ENCODE measurements at regions of chr3 and their contacts with region 1.

Region 1: DNA sequence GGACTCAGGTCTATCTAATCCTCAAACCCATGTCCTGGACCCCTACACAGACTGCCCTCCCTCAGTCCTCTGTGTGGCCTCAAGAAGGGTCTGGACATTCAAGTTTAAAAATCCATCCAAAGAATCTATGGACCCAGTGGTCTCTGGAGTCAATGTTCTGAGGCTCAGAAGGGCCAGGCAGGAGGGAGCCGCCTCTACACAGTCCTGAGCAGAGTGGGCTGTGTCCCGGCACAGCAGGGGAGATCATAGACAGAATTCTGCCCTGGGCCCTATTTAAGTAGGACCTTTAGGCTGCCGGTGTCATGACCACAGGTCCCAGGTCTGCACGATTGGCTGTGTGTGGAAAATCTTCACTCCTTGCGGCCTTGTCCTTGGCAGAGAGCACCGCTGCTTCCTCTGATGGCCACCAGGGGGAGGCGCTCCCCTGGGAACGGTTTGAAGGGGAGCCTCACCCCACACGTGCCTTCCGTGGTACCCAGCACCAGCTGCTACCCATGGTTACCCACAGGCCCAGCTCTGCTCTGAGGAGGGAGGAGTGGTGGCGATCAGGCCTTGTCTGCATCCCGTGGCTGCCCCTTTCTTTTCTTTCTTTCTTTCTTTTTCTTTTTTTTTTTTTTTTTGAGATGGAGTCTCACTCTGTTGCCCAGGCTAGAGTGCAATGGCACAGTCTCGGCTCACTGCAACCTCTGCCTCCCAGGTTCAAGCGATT is 37.9 kb downstream of the CHRD start:
- DNase-seq: peak; percentile 70 to 83 (median 78)
- ATAC-seq: peak; percentile 98
- H3K4me3 ChIP-seq: no peak overlapping the region
- H3K27ac ChIP-seq: no peak overlapping the region
- H3K4me1 ChIP-seq: no peaks in the 10 kb centered on the region
- H3K27me3 ChIP-seq: peaks cover 0 to 34% of the 10 kb centered on the region in 2 experiments; a peak in 3 of 5 replicates
- CTCF ChIP-seq: peak; percentile 88 to 92 (median 89)
- EP300 ChIP-seq: no peak
- POLR2A ChIP-seq: no peak
- RAD21 ChIP-seq: peak; percentile 62 to 89

Region 2: DNA sequence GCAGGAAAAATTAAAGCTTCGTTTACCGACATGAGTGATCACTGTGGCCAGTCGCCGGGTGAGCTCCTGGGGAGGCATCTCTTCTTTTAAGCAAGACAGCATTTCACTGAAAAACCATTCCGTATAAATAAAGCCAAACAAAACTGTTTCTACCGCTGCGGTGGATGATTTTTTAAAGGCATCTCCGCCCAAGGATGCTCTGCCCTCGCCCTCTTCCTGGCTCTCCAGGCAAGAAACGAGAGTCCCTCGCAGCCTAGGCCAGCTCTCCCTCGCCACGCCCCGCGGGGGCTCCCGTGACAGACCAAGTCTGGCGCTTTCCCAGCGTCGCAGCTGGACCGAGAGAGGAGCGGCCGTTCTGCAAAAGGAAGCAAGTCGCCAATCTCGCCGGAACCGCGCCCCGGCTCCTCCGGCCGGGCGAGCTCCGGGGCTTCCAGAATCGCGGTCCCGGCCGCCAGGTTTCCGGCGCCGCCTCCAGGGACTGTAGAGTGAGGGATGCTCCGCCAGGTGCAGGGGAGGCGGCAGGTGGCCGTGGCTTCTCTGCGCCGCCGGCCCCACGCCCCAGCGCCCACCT is 989.8 kb before region 1 on chr3:
- CTCF ChIA-PET with region 1: no interaction called
- POLR2A ChIA-PET with region 1: no interaction called
- in situ Hi-C with region 1: no loop called
- intact Hi-C with region 1: no loop called
- DNase-seq: peak; percentile 56 to 69 (median 58)
- ATAC-seq: peak; percentile 77
- H3K4me3 ChIP-seq: peak overlapping the region; percentile 88
- H3K27ac ChIP-seq: peak overlapping the region; percentile 34; the same call in 1 of the 3 replicates
- H3K4me1 ChIP-seq: peaks cover 8 to 25% of the 10 kb centered on the region in 2 experiments; a peak in 4 of 5 replicates
- H3K27me3 ChIP-seq: no peaks in the 10 kb centered on the region
- CTCF ChIP-seq: no peak
- EP300 ChIP-seq: no peak
- POLR2A ChIP-seq: no peak
- RAD21 ChIP-seq: no peak

Region 3: DNA sequence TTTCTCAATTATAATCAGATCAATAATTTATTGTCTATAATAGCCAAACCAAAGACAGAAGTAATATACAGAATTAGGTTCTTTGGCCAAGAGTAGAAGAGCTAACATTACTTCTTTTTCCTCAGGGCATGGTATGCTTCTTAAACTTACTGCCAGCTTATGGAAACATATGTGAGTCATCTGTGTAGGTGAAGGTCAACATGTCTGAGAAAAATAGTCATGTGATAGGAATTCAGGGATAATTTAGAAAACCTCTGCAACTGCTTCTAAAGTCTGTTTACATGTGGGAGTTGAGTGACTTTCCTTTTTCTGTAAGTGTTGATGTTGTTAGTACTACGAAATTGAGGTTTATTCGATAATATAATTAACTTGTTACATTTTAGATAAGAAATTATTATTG is 573.2 kb before region 1 on chr3:
- CTCF ChIA-PET with region 1: no interaction called
- POLR2A ChIA-PET with region 1: no interaction called
- in situ Hi-C with region 1: no loop called
- intact Hi-C with region 1: no loop called
- DNase-seq: no peak
- ATAC-seq: no peak
- H3K4me3 ChIP-seq: no peak overlapping the region
- H3K27ac ChIP-seq: no peak overlapping the region
- H3K4me1 ChIP-seq: no peaks in the 10 kb centered on the region
- H3K27me3 ChIP-seq: no peaks in the 10 kb centered on the region
- CTCF ChIP-seq: no peak
- EP300 ChIP-seq: no peak
- POLR2A ChIP-seq: no peak
- RAD21 ChIP-seq: no peak

Region 4: GRCh38 chr3:184469423-184469822 is 51.6 kb after region 1 on chr3:
- CTCF ChIA-PET with region 1: interaction called, 3 read pairs
- POLR2A ChIA-PET with region 1: interaction called, 5 read pairs
- in situ Hi-C with region 1: no loop called
- intact Hi-C with region 1: loop called (anchors 1 kb)
- DNase-seq: peak; percentile 48 to 59 (median 52)
- ATAC-seq: peak; percentile 84
- H3K4me3 ChIP-seq: no peak overlapping the region
- H3K27ac ChIP-seq: no peak overlapping the region
- H3K4me1 ChIP-seq: no peaks in the 10 kb centered on the region; a peak in 1 of 5 replicates
- H3K27me3 ChIP-seq: peaks cover 11 to 47% of the 10 kb centered on the region in 2 experiments; a peak in 4 of 5 replicates
- CTCF ChIP-seq: peak; percentile 76 to 80 (median 77)
- EP300 ChIP-seq: no peak
- POLR2A ChIP-seq: no peak
- RAD21 ChIP-seq: peak; percentile 42 to 78

Region 5: GRCh38 chr3:184513276-184514170 is 95.8 kb after region 1 on chr3:
- CTCF ChIA-PET with region 1: no interaction called
- POLR2A ChIA-PET with region 1: no interaction called
- in situ Hi-C with region 1: no loop called
- intact Hi-C with region 1: loop called (anchors 1 kb)
- DNase-seq: peak; percentile 78 to 87 (median 84)
- ATAC-seq: peak; percentile 100
- H3K4me3 ChIP-seq: no peak overlapping the region
- H3K27ac ChIP-seq: no peak overlapping the region
- H3K4me1 ChIP-seq: peaks cover 0 to 10% of the 10 kb centered on the region in 2 experiments; a peak in 2 of 5 replicates
- H3K27me3 ChIP-seq: peaks cover 10 to 35% of the 10 kb centered on the region in 2 experiments; a peak in 3 of 5 replicates
- CTCF ChIP-seq: peak; percentile 79 to 83 (median 82)
- EP300 ChIP-seq: no peak
- POLR2A ChIP-seq: no peak
- RAD21 ChIP-seq: peak; percentile 47 to 76

Region 6: DNA sequence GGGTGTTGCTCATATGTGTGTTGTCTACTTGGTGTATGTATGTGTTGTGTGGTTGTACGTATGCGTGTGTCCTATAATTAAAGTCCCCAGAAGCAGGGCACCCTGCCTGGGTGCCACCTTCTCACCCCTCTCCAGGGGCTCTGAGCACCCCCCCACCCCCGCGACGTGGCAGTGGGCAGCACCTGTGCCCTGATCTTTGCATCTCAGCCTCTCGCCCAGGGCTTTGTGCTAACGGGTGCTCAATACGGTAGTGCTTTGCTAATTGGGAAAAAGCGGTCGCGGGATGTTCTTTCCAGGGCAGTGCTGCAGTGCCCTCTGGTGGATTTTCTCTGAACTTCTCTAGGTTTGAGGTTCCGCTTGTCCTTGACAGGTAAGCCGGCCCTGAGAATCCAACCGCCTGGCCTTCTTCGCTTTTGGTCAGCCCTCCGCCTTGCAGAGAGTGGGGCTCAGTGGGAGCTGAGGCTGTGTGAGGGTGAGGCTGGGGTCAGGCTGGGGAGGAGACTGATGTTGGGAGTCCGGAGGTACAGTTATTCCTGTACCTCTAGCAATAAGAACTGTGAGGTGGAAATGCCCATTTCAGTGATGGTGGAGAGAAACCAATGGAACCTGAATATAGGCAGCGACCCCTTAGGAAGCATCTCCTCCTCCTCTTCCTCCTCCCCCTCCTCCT is 126.2 kb after region 1 on chr3:
- CTCF ChIA-PET with region 1: interaction called, 7 read pairs
- POLR2A ChIA-PET with region 1: no interaction called
- in situ Hi-C with region 1: no loop called
- intact Hi-C with region 1: loop called (anchors 1 kb)
- DNase-seq: peak; percentile 66 to 82 (median 73)
- ATAC-seq: peak; percentile 84
- H3K4me3 ChIP-seq: no peak overlapping the region
- H3K27ac ChIP-seq: no peak overlapping the region
- H3K4me1 ChIP-seq: peaks cover 0 to 4% of the 10 kb centered on the region in 2 experiments; a peak in 1 of 5 replicates
- H3K27me3 ChIP-seq: peaks cover 16 to 50% of the 10 kb centered on the region in 2 experiments; a peak in 3 of 5 replicates
- CTCF ChIP-seq: peak; percentile 83 to 91 (median 85)
- EP300 ChIP-seq: no peak
- POLR2A ChIP-seq: no peak
- RAD21 ChIP-seq: peak; percentile 74 to 82

Region 7: GRCh38 chr3:184561061-184561912 is 143.5 kb after region 1 on chr3 and contains the start of gene EPHB3:
- CTCF ChIA-PET with region 1: no interaction called
- POLR2A ChIA-PET with region 1: no interaction called
- in situ Hi-C with region 1: no loop called
- intact Hi-C with region 1: no loop called
- DNase-seq: peak; percentile 83 to 89 (median 88)
- ATAC-seq: peak; percentile 96
- H3K4me3 ChIP-seq: no peak within 1 kb of the TSS
- H3K27ac ChIP-seq: no peak within 1 kb of the TSS
- H3K4me1 ChIP-seq: peaks cover 0 to 8% of the 10 kb centered on the region in 2 experiments; a peak in 2 of 5 replicates
- H3K27me3 ChIP-seq: peaks cover 19 to 71% of the 10 kb centered on the region in 2 experiments
- CTCF ChIP-seq: peak; percentile 96 to 100 (median 99)
- EP300 ChIP-seq: no peak
- POLR2A ChIP-seq: no peak
- RAD21 ChIP-seq: peak; percentile 93 to 99
- polyA plus RNA-seq, gene EPHB3: not detected

Region 8: DNA sequence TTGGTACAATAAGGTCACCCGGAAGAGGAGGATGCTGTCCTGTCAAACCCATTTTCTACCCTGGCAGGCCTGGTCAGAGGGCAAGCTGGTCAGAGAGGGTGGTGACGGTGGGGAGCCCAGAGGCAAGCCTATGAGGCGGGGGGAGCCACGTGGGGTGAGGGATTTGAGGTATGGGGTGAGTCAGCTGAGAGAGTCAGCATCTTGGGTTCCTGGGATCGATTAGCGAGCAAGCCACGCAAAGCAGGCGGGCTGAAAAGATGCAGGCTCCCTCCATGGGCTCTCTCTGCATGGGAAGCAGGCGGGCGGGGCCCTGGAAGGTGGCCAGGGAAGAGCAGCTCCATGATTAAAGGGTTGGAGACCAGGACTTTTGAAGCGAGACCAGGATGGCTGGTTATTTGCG is 246.0 kb after region 1 on chr3:
- CTCF ChIA-PET with region 1: no interaction called
- POLR2A ChIA-PET with region 1: no interaction called
- in situ Hi-C with region 1: no loop called
- intact Hi-C with region 1: no loop called
- DNase-seq: no peak
- ATAC-seq: no peak
- H3K4me3 ChIP-seq: no peak overlapping the region
- H3K27ac ChIP-seq: no peak overlapping the region
- H3K4me1 ChIP-seq: peaks cover 0 to 5% of the 10 kb centered on the region in 2 experiments; a peak in 3 of 5 replicates
- H3K27me3 ChIP-seq: peaks cover 50 to 74% of the 10 kb centered on the region in 2 experiments
- CTCF ChIP-seq: no peak
- EP300 ChIP-seq: no peak
- POLR2A ChIP-seq: no peak
- RAD21 ChIP-seq: no peak

Region 9: DNA sequence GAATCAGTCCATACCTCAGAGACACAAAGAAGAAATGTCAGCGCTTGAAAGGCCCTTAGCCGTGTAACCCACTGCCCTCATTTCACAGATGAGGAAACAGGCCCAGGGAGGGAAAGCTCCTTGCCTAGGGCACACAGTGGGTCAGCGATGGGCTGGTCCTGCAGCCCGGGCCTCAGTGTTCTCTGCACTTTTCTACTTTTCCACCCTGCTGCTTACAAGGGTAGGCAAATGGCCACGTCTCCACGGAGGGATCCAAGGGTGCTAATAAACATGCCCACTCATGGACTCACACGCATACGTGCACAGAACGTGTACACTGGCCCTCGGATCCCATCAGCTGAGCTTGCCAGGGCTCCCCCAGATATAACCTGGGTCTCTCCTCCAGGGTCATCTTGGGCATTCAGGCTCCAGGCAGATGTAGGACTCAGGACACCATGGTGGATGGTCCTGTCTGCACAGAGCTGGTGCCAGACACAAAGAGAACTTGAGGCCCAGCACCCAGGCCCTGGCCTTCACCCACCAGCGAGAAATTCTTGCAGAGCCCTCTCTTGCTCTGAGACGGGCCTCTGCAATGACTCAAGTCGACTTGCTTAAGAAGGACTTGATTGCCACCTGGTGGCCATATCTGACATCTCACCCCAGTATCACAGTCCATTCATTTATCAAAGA is 359.7 kb after region 1 on chr3:
- CTCF ChIA-PET with region 1: no interaction called
- POLR2A ChIA-PET with region 1: no interaction called
- in situ Hi-C with region 1: loop called (anchors 25 kb)
- intact Hi-C with region 1: no loop called
- DNase-seq: peak; percentile 81 to 90 (median 82)
- ATAC-seq: peak; percentile 97
- H3K4me3 ChIP-seq: no peak overlapping the region
- H3K27ac ChIP-seq: no peak overlapping the region
- H3K4me1 ChIP-seq: peaks cover 0 to 9% of the 10 kb centered on the region in 2 experiments; a peak in 1 of 5 replicates
- H3K27me3 ChIP-seq: peaks cover 35 to 66% of the 10 kb centered on the region in 2 experiments
- CTCF ChIP-seq: peak; percentile 78 to 93 (median 89)
- EP300 ChIP-seq: no peak
- POLR2A ChIP-seq: no peak
- RAD21 ChIP-seq: peak; percentile 91 to 99

Measured in K562 (cell line).